GM18951 (cell line): ENCODE measurements at regions of chr20 and their contacts with region 1.

Region 1: DNA sequence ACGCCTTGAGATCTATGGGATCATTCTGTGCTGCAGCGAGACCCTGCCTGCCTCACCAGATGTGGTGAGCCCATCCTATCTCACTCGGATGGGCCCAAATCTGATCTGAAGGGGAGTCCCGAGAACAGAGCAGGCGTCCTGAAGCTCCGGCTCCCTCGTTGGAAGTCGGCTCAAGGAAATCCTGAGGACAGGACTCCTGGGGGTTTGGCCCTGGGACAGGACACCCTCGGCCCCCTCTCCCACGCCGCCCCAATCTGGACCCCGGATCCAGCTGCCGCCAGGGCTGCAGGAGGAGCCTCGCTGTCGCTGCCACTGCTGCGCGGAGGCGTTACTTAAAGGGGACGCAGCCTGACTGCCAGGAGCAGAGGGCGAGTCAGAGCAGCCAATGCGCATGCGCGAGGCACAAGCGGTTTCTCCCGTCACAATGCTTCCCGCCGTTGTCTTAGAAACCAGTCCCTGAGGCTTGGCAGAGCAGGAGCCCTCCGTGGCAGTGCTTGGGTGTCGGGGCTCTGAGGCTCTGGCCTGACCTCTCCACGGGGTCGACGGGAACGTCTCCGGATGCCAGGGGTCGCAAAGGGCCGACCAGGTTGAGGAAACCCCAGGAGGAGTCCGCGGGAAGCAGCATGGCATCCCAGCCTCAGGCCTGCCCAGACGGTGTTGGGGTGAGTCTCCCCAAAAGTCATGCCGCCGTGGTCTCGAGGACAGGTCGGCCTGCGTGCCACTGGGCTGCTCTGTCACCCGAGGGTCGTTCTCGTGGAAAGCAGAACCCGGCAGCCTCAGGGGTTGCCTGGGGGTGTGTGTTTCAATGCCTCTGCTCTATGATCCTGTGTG is 1567.8 kb upstream of the DEFB115 start:
- POLR2A ChIP-seq: no peak

Region 2: DNA sequence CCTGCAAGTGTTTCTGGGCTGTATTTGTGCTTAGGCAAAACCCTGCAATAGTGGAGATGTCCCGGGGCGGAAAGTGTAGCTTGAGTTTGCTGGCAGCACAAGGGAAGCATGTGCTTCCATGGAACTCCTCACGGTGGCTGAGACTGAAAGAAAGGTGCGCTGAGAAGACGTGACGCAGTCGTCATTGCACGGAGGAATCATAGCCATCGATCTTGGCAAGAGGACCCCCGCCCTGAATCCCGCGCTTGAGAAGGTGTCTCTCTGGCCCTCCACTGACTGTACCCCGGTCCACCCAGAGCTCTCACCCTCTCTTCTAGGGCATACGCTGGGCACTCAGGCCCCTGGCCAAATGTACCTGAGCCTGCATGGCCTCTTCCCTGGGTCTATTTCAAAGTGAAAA is 486.1 kb after region 1 on chr20:
- in situ Hi-C with region 1: loop called (anchors 10 kb)
- POLR2A ChIP-seq: no peak